Motor neuron (in vitro differentiated cells): ENCODE measurements at regions of chr13 and their contacts with region 1.

Region 1: DNA sequence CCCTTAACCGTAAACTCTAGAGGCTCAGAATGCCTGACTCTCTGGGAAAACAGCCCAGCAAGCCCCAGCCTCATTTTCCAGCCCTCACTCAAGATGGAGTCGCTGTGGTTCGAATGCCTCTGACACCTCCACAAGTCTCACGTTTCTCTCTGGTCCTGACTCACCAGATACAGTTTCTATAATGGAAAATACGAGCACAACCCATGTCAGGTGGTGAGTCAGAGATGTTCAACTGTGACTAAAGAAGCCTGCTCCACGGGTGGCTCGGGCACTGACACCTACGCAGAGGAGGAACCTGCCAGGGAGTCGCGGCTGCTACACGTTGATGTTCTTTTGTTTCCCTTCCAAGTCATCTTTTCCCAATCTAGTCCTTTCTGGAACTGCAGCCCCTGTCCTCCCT is 87.1 kb upstream of the STK24 start:
- ATAC-seq: peak in 2 of 8 experiments; percentile 24 to 72
- H3K4me3 ChIP-seq: no peak overlapping the region
- H3K27ac ChIP-seq: no peak overlapping the region
- H3K4me1 ChIP-seq: no peaks in the 10 kb centered on the region

Region 2: GRCh38 chr13:97946951-97947588 is 717.0 kb before region 1 on chr13:
- in situ Hi-C with region 1: no loop called
- ATAC-seq: peak in 2 of 8 experiments; percentile 51 to 54
- H3K4me3 ChIP-seq: no peak overlapping the region
- H3K27ac ChIP-seq: no peak overlapping the region
- H3K4me1 ChIP-seq: no peaks in the 10 kb centered on the region

Region 3: DNA sequence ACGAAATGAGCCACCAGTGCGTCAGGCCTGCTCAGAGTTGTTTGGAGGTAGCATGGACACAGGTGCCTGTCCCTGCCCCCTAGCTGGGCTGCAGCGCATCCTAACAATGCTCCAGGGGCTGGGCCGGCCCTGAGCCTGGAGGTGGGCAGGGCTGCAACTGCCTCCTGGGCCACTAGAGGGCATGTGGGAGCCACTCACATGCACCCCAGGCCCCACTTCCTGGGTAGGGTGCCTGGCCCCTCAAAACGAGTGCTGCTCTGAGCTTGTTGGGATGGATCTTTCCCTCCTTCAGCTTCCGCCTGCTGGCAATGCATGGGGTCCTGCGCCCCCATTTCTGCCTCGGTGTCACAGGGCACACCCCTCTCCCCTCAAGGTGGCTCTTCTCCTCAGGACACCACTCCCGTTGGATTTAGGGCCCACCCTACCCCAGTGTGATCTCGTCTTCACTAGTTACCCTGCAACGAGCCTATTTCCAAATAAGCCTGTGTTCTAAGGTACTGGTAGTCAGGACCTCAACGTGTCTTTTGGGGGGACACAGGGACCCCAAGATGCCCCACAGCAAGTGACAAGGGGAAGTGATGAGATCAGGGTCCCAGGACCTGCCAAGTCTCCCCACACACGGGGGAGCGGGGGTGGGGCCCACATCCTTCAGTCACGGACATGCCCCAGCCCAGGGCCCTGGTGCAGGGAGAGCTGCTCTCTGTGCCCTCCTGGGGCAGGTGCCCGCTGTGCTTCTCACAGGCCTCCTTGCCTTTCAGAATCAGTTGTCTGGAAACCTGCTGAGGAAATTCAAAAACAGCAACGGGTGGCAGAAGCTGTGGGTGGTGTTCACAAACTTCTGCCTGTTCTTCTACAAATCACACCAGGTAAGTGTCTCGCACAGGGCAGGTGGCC is 218.5 kb before region 1 on chr13:
- in situ Hi-C with region 1: loop called in 6 of 9 experiments (anchors 10 to 25 kb)
- ATAC-seq: peak; percentile 72 to 94 (median 88)
- H3K4me3 ChIP-seq: no peak overlapping the region
- H3K27ac ChIP-seq: no peak overlapping the region
- H3K4me1 ChIP-seq: peaks cover 10 to 13% of the 10 kb centered on the region in 2 donors